A549 (cell line): ENCODE measurements at regions of chr11 and their contacts with region 1.

Region 1: DNA sequence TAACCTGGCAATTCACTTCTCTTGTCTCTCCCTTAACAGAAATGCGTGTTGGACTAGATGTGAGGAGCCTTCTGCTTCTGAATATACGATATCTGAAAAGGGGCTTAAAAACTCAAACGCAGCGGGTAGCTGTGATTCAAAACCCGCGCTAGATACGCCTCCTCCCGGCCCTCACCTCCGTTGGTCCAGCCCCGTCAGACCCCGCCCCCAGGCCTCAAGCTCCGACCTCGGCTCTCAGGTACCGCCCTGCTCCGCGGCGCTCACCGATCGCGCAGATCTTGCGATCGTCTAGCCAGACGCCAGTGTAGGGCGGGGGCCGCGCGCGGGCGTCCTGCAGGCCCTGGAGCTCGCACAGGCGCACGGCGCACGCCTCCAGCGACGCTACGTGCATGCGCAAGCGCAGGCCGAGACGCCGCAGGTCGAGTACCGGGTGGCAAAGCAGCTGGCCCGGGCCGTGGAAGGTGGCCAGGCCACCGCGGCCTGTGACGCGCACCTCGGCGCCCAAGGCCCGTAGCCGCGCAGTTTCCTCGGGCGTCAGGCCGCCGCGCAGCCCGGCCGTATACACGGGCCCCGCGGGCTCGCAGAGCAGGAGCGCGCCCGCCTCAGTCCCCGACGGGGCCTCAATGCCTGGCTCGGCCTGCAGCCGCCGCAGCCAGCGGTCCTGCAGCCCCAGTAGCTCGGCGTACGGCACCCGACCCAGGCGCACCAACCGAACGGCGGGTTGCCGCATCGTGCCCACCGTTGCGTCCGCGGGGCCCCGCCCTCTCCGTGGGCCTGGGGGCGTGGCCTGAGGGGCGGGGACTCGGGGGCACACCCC is at the start of gene LIPT2:
- DNase-seq: peak; percentile 81 to 99
- ATAC-seq: peak; percentile 95 to 98
- H3K4me3 ChIP-seq: peak within 1 kb of the TSS; percentile 62
- H3K27ac ChIP-seq: peak within 1 kb of the TSS; percentile 93 to 98
- H3K4me1 ChIP-seq: peaks cover 14% of the 10 kb centered on the region; the same call in 2 of the 3 replicates
- CTCF ChIP-seq: no peak
- EP300 ChIP-seq: no peak
- POLR2A ChIP-seq: peak; percentile 78
- RAD21 ChIP-seq: no peak
- polyA plus RNA-seq, gene LIPT2: 9.8 and 12.9 TPM in 2 replicates

Region 2: DNA sequence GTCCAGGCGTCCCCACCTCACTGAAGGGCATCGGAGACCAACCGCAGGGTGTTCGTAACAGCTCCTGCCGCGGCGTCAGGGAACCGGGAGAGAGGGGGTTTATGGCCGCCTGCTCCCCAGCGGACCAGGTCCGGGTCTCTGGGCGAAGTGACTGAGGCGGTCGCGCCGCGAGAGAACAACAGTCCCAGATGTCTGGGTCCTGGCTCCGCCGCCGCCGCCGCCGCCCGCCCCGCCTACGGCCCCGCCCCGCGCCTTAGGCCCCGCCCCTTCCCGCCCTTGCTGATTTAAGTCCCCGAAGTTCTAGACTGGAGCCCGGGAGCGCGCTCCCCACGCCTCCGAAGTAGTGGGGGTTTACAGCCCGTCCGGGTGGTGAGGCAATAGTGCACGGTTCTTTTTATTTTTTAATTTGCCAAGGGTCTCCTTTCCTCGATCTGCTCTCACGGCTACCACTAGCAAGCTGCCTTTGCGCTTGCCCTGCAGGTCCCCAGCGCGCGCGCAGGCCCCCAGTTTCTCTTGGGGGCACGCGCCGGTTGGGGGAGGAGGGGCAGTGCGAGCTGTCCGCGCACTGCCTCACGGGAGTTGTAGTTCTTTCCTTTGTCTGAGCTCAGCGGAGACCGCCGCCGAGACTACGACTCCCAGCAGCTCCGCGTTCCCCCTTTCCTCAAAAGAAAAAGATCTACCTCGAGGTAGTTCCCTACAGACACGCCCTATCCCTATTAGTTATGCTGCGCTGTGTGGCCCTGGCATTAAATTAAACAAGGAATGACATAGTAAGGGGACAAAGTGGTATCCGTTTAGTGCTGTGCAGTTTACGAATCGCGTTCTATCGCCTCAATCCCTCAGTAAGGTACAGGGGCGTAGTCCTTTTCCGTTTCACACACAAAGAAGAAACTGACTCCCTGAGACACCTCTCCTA is 94.7 kb before region 1 on chr11 and contains the start of gene PGM2L1:
- CTCF ChIA-PET with region 1: no interaction called
- POLR2A ChIA-PET with region 1: interaction called, 12 read pairs
- DNase-seq: peak; percentile 95
- ATAC-seq: peak; percentile 91 to 92
- H3K4me3 ChIP-seq: peak within 1 kb of the TSS; percentile 99
- H3K27ac ChIP-seq: peak within 1 kb of the TSS; percentile 89 to 91
- H3K4me1 ChIP-seq: peaks cover 21% of the 10 kb centered on the region
- CTCF ChIP-seq: no peak
- EP300 ChIP-seq: no peak
- POLR2A ChIP-seq: peak; percentile 70
- RAD21 ChIP-seq: peak in 1 of 2 experiments; percentile 9; a peak in 1 of 5 replicates
- polyA plus RNA-seq, gene PGM2L1: 17.6 and 21.8 TPM in 2 replicates

Region 3: GRCh38 chr11:74462009-74462408 is 31.2 kb before region 1 on chr11:
- CTCF ChIA-PET with region 1: interaction called, 4 read pairs
- POLR2A ChIA-PET with region 1: interaction called, 13 read pairs
- DNase-seq: no peak
- ATAC-seq: no peak
- H3K4me3 ChIP-seq: no peak overlapping the region
- H3K27ac ChIP-seq: peak overlapping the region in 1 of 2 experiments; percentile 29; a peak in 3 of 6 replicates
- H3K4me1 ChIP-seq: peaks cover 32% of the 10 kb centered on the region
- CTCF ChIP-seq: no peak
- EP300 ChIP-seq: no peak
- POLR2A ChIP-seq: no peak
- RAD21 ChIP-seq: no peak

Region 4: DNA sequence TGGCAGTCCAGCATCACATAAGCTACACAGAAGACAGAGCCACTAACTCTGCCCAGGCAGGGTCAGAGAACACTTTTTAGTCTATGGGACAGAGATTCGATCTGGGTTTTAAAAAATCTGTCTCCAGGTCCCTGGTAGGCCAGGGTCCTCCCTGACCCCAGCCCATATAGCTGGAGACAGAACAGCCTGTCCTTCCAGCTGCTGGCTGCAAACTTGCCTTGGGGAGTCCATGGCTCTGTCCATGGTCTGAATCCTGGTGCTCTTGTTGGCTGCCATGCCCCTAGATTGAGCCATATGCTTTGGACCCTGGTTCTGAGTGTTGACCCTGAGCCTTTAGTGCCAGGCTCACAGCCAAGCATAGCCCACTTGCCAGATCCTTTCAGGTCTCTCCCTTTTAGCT is 13.6 kb after region 1 on chr11:
- CTCF ChIA-PET with region 1: interaction called, 5 read pairs
- POLR2A ChIA-PET with region 1: interaction called, 68 read pairs
- DNase-seq: no peak
- ATAC-seq: no peak
- H3K4me3 ChIP-seq: no peak overlapping the region
- H3K27ac ChIP-seq: no peak overlapping the region
- H3K4me1 ChIP-seq: peaks cover 15% of the 10 kb centered on the region
- CTCF ChIP-seq: no peak
- EP300 ChIP-seq: no peak
- POLR2A ChIP-seq: no peak
- RAD21 ChIP-seq: no peak

Region 5: GRCh38 chr11:74520927-74521665 is 27.9 kb after region 1 on chr11:
- CTCF ChIA-PET with region 1: interaction called, 4 read pairs
- POLR2A ChIA-PET with region 1: interaction called, 18 read pairs
- DNase-seq: no peak
- ATAC-seq: no peak
- H3K4me3 ChIP-seq: no peak overlapping the region
- H3K27ac ChIP-seq: no peak overlapping the region
- H3K4me1 ChIP-seq: no peaks in the 10 kb centered on the region
- CTCF ChIP-seq: no peak
- EP300 ChIP-seq: no peak
- POLR2A ChIP-seq: no peak
- RAD21 ChIP-seq: no peak

Region 6: DNA sequence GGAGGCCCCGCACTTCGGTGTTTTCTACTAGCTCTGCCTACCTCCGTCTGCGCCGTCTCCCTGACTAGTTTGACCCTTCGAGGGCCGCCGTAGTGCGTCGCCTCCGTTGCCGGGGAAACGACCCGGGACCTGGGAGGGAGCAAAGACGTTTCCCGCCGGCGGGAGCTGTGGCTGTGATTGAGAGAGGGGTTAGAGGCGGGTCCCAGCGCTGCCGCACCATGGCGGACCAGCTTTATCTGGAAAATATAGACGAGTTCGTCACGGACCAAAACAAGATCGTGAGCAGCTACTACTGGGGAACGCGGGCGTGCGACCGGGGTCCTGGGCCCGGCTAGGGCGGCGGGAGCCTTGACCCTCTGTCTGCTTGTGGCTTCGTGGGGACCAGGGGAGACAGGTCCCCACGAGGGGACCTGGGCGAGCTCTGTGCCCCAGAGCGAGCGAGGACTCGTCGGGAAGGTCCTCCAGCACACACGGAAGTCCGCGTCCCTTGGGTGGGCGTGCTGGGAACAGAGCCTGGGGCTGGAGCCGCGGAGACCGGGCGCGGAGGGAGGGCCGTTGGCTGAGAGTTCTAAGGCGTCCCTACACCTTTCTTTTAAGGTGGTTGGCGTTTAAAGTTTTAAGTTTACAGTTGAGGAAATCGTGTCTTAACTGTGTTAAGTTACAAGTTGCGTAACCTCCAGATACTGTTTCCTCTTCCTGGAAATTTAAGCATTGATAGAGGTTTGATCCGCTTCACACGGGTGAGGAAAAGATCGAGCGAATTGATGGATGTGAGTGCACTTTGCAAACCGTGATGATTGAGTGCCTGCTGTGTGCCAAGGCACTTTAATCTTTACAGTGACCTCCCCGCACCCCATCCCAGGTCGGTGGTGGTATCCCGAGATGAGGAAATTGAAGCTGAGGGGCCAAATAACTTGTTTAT is 99.5 kb after region 1 on chr11 and contains the start of gene POLD3:
- CTCF ChIA-PET with region 1: no interaction called
- POLR2A ChIA-PET with region 1: interaction called, 19 read pairs
- DNase-seq: peak; percentile 80 to 91
- ATAC-seq: peak; percentile 97 to 98
- H3K4me3 ChIP-seq: peak within 1 kb of the TSS; percentile 98
- H3K27ac ChIP-seq: peak within 1 kb of the TSS; percentile 94 to 98
- H3K4me1 ChIP-seq: peaks cover 18% of the 10 kb centered on the region; the same call in 2 of the 3 replicates
- CTCF ChIP-seq: no peak
- EP300 ChIP-seq: no peak
- POLR2A ChIP-seq: peak; percentile 44
- RAD21 ChIP-seq: no peak
- polyA plus RNA-seq, gene POLD3: 36.3 and 37.9 TPM in 2 replicates